Naive thymus-derived CD4-positive, alpha-beta T cell (primary cell): ENCODE measurements at regions of chr17 and their contacts with region 1.

Region 1: DNA sequence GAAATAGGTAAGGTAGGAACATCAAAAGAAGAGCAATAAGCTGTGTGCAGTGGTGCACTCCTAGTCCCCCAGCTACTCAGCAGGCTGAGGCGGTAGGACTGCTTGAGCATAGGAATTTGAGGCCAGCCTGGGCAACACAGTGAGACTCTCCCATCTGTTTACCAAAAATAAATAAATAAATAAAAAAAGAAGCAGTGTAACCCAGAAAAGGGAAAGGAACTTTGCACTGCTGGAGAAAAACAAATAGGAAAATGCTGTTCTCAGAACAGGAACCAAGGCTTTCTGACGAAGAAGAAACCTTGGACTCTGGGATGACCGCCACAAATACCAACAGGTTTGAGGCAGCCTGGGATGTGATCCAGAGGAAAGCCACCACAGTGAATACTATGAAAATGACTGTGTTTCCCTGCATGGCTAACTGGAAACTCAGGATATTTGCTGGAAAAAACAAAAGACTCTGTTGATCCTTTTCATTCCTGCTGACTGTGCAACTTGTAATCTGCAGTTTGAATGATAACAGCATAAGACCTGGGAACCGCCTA is 41.2 kb downstream of the TTC19 start:
- DNase-seq: no peak
- ATAC-seq: no peak
- H3K4me3 ChIP-seq: no peak overlapping the region
- H3K4me3 Mint-ChIP-seq: no peak overlapping the region
- H3K27ac ChIP-seq: no peak overlapping the region
- H3K27ac Mint-ChIP-seq: no peak overlapping the region
- H3K4me1 ChIP-seq: no peaks in the 10 kb centered on the region
- H3K4me1 Mint-ChIP-seq: peaks cover 0 to 18% (median 9%) of the 10 kb centered on the region in 7 donors
- H3K27me3 ChIP-seq: no peaks in the 10 kb centered on the region
- H3K27me3 Mint-ChIP-seq: no peaks in the 10 kb centered on the region

Region 2: DNA sequence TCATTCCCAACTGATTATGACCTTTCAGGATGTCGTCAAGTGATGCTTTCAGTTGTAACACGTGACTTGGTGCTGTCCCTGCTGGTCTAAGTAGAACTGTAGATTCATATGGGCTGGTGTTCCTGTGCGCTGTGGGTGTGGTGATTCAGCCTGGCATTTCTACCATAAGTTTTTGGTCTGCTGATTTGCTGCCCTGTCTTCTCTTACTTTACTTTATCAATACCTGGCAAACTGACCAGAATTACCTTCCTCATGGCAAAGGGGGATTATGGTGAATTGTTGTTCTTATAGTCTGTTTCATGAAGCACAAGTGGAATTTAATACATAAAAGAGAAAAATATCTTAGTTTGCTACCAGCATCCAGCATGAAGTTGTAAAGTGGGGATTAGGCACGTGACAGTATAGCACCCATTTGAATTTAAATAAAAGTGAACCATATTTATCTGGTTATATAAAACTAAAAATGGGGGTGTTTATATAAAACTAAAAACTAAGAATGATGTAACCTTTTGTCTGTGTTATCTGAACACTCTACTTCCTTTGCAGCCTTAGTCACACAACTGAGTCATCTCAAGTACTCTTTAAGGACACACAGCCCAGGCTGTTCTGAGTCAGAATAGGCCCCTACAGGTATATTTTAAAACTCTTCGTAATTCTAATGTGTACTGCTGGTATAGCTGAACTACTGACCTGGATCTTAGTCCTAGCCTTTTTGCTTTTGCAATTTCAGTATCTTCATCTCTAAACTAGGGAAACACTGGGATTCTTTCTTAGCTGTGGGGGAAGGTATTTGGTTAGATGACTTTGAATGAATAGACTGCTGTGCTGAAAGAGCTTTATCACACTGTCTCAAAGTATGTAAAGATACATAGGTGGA is 12.8 kb before region 1 on chr17:
- CTCF ChIA-PET with region 1: no interaction called
- POLR2A ChIA-PET with region 1: interaction called, 3 read pairs
- intact Hi-C with region 1: loop called in 1 of 2 experiments (anchors 1 kb)
- DNase-seq: peak in 2 of 9 donors; percentile 15 to 37
- ATAC-seq: peak; percentile 77
- H3K4me3 ChIP-seq: no peak overlapping the region
- H3K4me3 Mint-ChIP-seq: peak overlapping the region in 2 of 10 donors; percentile 26 to 67
- H3K27ac ChIP-seq: no peak overlapping the region
- H3K27ac Mint-ChIP-seq: peak overlapping the region; percentile 45 to 94 (median 81)
- H3K4me1 ChIP-seq: no peaks in the 10 kb centered on the region
- H3K4me1 Mint-ChIP-seq: peaks cover 0 to 26% (median 4%) of the 10 kb centered on the region in 7 donors
- H3K27me3 ChIP-seq: no peaks in the 10 kb centered on the region
- H3K27me3 Mint-ChIP-seq: no peaks in the 10 kb centered on the region

Region 3: GRCh38 chr17:16080366-16080765 is 39.6 kb after region 1 on chr17:
- CTCF ChIA-PET with region 1: no interaction called
- POLR2A ChIA-PET with region 1: no interaction called
- intact Hi-C with region 1: no loop called
- DNase-seq: no peak
- ATAC-seq: no peak
- H3K4me3 ChIP-seq: no peak overlapping the region
- H3K4me3 Mint-ChIP-seq: no peak overlapping the region
- H3K27ac ChIP-seq: no peak overlapping the region
- H3K27ac Mint-ChIP-seq: no peak overlapping the region
- H3K4me1 ChIP-seq: no peaks in the 10 kb centered on the region
- H3K4me1 Mint-ChIP-seq: peaks cover 3 to 30% (median 17%) of the 10 kb centered on the region in 7 donors
- H3K27me3 ChIP-seq: no peaks in the 10 kb centered on the region
- H3K27me3 Mint-ChIP-seq: no peaks in the 10 kb centered on the region